ENCODE measurements at regions of chr2 and their contacts with region 1.

Region 1: GRCh38 chr2:178914259-178914849 is 107.1 kb upstream of the TTN start:
- DNase-seq: peak; percentile 37
- ATAC-seq: peak; percentile 93
- H3K4me3 Mint-ChIP-seq: no peak overlapping the region
- H3K27ac Mint-ChIP-seq: no peak overlapping the region
- H3K4me1 Mint-ChIP-seq: peaks cover 2% of the 10 kb centered on the region
- H3K27me3 Mint-ChIP-seq: no peaks in the 10 kb centered on the region
- CTCF ChIP-seq: no peak

Region 2: GRCh38 chr2:178090483-178090882 is 823.9 kb before region 1 on chr2:
- CTCF ChIA-PET with region 1: no interaction called
- POLR2A ChIA-PET with region 1: no interaction called
- intact Hi-C with region 1: no loop called
- DNase-seq: no peak
- ATAC-seq: no peak
- H3K4me3 Mint-ChIP-seq: no peak overlapping the region
- H3K27ac Mint-ChIP-seq: no peak overlapping the region
- H3K4me1 Mint-ChIP-seq: no peaks in the 10 kb centered on the region
- H3K27me3 Mint-ChIP-seq: peaks cover 6% of the 10 kb centered on the region
- CTCF ChIP-seq: no peak

Region 3: DNA sequence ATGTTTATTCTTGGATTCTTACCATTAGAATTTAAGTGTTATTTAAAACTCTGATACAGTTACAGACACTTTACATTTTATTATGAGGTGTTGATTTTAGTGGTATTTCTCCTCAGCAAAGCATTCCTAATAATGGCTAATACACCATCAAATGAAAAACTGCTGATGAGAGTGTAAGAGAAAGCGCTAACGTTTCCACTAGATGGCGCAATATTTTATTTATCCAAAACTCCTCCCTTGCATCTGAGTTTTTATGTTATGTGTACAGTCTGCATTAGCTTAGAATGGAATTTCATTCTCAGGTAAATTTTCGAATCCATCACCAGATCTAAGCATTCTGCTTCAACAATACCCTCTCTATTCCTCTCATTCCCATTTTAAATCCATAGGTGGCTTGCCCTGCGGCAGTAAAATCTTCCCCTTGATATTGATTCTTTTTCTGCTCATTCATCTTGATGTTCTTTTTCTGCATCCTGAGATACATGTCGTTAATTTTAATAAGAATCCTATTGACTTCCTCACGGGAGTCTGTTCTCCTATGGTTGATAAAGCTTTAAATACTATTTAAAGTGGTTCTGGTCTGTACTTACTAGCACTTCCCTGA is 517.2 kb before region 1 on chr2:
- CTCF ChIA-PET with region 1: no interaction called
- POLR2A ChIA-PET with region 1: no interaction called
- intact Hi-C with region 1: loop called (anchors 1 kb)
- DNase-seq: no peak
- ATAC-seq: no peak
- H3K4me3 Mint-ChIP-seq: no peak overlapping the region
- H3K27ac Mint-ChIP-seq: no peak overlapping the region
- H3K4me1 Mint-ChIP-seq: no peaks in the 10 kb centered on the region
- H3K27me3 Mint-ChIP-seq: peaks cover 3% of the 10 kb centered on the region
- CTCF ChIP-seq: peak; percentile 79

Region 4: DNA sequence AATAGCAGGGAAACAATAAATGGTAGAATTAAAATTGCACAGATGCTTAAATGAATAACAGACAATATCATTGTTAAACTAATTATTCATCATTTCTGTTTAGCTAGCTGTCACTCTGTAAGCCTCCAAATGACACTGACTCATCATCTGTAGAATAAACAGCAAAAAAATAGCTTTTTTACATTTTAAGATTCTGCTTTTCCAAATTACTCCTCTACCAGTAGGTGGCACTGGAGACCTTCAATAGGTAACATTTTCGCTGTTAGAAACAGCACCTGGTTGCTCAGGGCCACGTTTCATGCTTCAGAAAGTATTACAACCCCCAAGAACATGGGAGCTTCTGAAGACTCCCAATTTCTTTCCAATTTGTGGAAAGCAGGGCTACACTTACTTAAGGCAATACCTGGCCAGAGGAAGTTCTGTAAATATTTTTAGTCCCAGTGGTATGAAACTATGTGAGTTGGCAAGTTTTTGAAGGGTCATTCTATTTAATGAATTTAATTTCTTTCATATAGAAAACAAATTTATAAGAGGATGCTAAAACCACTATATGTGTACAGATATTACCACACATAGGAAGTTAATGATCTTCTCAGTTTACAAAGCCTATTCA is 152.5 kb before region 1 on chr2:
- CTCF ChIA-PET with region 1: interaction called, 5 read pairs
- POLR2A ChIA-PET with region 1: no interaction called
- intact Hi-C with region 1: loop called (anchors 1 kb)
- DNase-seq: no peak
- ATAC-seq: peak; percentile 54
- H3K4me3 Mint-ChIP-seq: no peak overlapping the region
- H3K27ac Mint-ChIP-seq: no peak overlapping the region
- H3K4me1 Mint-ChIP-seq: peaks cover 1% of the 10 kb centered on the region
- H3K27me3 Mint-ChIP-seq: no peaks in the 10 kb centered on the region
- CTCF ChIP-seq: no peak

Region 5: DNA sequence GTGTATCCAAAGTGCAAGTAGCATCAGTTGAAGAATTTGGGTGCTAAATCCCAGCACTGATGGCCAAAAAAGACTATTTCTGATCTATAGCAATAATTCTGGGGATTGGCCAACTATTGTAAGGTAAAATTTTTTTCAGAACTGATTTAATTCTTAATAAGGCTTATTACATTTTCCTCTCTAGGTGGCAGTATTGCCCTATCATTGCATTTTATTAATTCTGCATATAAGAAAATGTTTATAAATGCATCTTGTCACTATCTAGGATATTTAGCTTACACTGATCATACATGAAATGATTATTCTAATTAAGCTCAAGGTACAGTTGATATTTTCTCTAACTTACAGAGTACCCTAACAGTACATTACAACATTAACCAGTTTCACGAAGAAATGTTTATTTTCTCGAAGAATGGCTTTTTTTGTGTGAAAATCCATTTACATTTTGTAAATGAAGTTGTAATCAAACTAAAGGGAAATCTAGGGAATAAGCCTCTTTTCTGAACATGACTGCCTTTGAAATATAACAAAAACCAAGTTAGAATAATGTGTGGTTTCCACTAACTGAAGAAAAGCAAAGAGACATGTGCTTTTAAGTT is 118.2 kb before region 1 on chr2:
- CTCF ChIA-PET with region 1: interaction called, 5 read pairs
- POLR2A ChIA-PET with region 1: no interaction called
- intact Hi-C with region 1: loop called (anchors 2 kb)
- DNase-seq: no peak
- ATAC-seq: no peak
- H3K4me3 Mint-ChIP-seq: no peak overlapping the region
- H3K27ac Mint-ChIP-seq: no peak overlapping the region
- H3K4me1 Mint-ChIP-seq: no peaks in the 10 kb centered on the region
- H3K27me3 Mint-ChIP-seq: no peaks in the 10 kb centered on the region
- CTCF ChIP-seq: no peak

Region 6: DNA sequence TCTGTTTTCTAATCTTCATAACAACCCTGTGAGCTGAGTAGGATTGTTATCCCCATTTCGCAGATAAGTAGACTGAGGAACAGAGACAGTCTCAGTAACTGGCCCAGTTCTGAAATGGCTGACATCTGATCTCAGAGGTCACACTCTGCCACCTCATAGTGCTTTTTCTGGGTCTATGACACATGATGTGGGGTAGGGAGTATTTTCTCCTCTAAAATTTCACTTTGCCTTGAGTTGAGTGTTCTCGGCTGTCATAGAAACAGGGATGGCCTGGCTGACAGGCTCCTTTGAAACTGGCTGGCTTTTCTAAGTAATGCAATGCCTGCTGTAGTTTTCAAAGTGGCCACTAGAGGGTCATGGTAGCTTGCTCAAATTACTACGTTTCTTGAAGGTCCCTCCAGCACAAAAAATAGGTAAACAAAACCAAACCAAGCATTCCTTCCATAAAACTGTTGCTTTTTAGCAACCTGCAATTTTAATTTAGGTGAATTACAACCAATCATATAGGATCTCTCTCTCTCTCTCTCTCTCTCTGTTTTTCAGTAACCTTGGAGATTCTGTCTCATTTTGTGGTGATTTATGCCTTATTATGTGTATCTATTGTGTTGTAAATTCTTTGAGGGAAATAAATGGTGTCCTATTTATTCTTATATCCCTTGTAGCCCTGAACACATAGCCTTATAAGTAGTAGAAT is 22.9 kb before region 1 on chr2:
- CTCF ChIA-PET with region 1: interaction called, 14 read pairs
- POLR2A ChIA-PET with region 1: no interaction called
- intact Hi-C with region 1: loop called (anchors 1 kb)
- DNase-seq: no peak
- ATAC-seq: peak; percentile 76
- H3K4me3 Mint-ChIP-seq: no peak overlapping the region
- H3K27ac Mint-ChIP-seq: no peak overlapping the region
- H3K4me1 Mint-ChIP-seq: no peaks in the 10 kb centered on the region
- H3K27me3 Mint-ChIP-seq: no peaks in the 10 kb centered on the region
- CTCF ChIP-seq: peak; percentile 64

Region 7: GRCh38 chr2:179129574-179130238 is 215.4 kb after region 1 on chr2:
- CTCF ChIA-PET with region 1: interaction called, 40 read pairs
- POLR2A ChIA-PET with region 1: no interaction called
- intact Hi-C with region 1: loop called (anchors 5 kb)
- DNase-seq: no peak
- ATAC-seq: no peak
- H3K4me3 Mint-ChIP-seq: no peak overlapping the region
- H3K27ac Mint-ChIP-seq: no peak overlapping the region
- H3K4me1 Mint-ChIP-seq: peaks cover 2% of the 10 kb centered on the region
- H3K27me3 Mint-ChIP-seq: no peaks in the 10 kb centered on the region
- CTCF ChIP-seq: no peak